Dendritic cell treated with granulocyte-macrophage colony-stimulating factor and Interleukin-4, amounts not matched to agents 40 ng/mL and 50 ng/mL, for 4 days (primary cell): ENCODE measurements at regions of chr7 and their contacts with region 1.

Region 1: GRCh38 chr7:33757562-33758165 is 147.7 kb upstream of the BMPER start:
- H3K4me3 Mint-ChIP-seq: no peak overlapping the region
- H3K27ac Mint-ChIP-seq: no peak overlapping the region
- H3K4me1 Mint-ChIP-seq: no peaks in the 10 kb centered on the region
- H3K27me3 Mint-ChIP-seq: no peaks in the 10 kb centered on the region

Region 2: DNA sequence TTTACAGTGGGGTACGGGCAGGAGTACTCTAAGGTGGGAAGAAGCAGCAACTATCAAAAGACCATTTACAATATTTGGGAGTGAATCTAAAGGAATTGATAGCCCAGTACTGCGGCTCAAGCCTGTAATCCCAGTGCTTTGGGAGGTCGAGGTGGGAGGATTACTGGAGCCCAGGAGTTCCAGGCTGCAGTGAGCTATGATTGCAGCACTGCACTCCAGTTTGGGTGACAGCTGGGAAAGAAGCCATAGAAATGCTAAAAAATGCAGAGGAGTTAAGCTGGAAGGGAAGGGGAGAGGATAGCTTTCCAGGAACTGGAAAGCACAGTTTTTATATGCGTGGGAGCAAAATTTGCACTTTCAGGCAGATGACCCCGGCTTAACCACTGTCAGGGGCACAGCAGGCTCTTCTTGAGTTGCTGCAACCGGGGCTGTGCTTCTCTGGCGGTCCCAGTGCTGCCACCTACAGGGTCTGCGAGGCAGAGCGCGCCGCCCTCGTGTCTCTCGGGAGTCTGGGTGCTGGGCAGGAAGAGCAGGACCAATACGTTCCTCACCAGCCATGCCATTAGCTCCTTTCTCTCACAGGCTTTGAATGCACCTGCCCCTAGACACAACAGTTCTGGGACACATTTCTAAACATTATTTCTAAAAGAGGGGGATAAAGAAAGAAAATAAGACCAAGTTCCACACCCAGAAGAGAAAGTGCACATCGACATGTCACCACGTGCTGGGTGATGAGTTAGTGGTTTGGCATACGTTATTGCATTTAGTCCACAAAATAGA is 137.6 kb after region 1 on chr7:
- intact Hi-C with region 1: loop called (anchors 10 kb)
- H3K4me3 Mint-ChIP-seq: no peak overlapping the region
- H3K27ac Mint-ChIP-seq: no peak overlapping the region
- H3K4me1 Mint-ChIP-seq: peaks cover 8% of the 10 kb centered on the region
- H3K27me3 Mint-ChIP-seq: peaks cover 12% of the 10 kb centered on the region

Region 3: GRCh38 chr7:33921216-33921938 is 163.7 kb after region 1 on chr7:
- intact Hi-C with region 1: no loop called
- H3K4me3 Mint-ChIP-seq: no peak overlapping the region
- H3K27ac Mint-ChIP-seq: no peak overlapping the region
- H3K4me1 Mint-ChIP-seq: no peaks in the 10 kb centered on the region
- H3K27me3 Mint-ChIP-seq: no peaks in the 10 kb centered on the region